Ascending aorta (tissue), 2 donors: ENCODE measurements at regions of chr20 and their contacts with region 1.

Region 1: GRCh38 chr20:50929299-50930138 is 1.7 kb downstream of the ADNP start:
- DNase-seq: peak; percentile 65 to 96
- H3K4me3 ChIP-seq: peak overlapping the region; percentile 89 to 98
- H3K27ac ChIP-seq: peak overlapping the region; percentile 72 to 75
- H3K4me1 ChIP-seq: peaks cover 0 to 18% of the 10 kb centered on the region in 2 donors
- H3K27me3 ChIP-seq: no peaks in the 10 kb centered on the region
- CTCF ChIP-seq: peak; percentile 92 to 95 (median 93)

Region 2: GRCh38 chr20:50815162-50815989 is 114.1 kb before region 1 on chr20:
- intact Hi-C with region 1: loop called (anchors 1 kb)
- DNase-seq: no peak
- H3K4me3 ChIP-seq: no peak overlapping the region
- H3K27ac ChIP-seq: peak overlapping the region; percentile 52 to 60
- H3K4me1 ChIP-seq: peaks cover 4 to 31% of the 10 kb centered on the region in 2 donors
- H3K27me3 ChIP-seq: no peaks in the 10 kb centered on the region
- CTCF ChIP-seq: no peak

Region 3: DNA sequence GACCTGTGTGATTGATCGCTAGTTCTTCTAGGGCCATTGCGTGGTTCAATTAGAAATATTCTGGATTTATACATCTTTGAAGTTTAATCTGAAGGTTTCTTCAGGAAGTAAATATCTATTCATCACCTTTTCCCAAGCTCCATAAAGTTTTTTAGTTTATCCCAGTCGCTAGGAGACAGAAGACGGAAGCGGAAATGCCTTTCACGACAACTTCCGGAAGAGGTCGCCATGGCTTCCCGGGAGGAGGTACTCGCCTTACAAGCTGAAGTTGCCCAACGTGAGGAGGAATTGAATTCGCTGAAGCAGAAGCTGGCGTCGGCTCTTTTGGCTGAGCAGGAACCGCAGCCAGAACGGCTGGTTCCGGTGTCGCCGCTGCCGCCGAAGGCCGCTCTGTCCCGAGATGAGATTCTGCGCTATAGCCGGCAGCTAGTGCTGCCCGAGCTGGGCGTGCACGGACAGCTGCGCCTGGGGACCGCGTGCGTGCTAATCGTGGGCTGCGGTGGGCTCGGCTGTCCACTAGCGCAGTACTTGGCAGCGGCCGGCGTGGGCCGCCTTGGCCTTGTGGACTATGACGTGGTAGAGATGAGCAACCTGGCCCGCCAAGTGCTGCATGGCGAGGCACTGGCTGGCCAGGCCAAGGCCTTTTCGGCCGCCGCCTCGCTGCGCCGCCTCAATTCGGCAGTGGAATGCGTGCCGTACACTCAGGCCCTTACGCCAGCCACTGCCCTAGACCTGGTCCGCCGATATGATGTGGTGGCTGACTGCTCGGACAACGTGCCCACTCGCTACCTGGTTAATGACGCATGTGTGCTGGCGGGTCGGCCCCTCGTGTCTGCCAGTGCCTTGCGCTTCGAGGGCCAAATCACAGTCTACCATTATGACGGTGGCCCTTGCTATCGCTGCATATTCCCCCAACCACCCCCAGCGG is 29.4 kb after region 1 on chr20 and contains the start of gene MOCS3:
- intact Hi-C with region 1: loop called (anchors 1 kb)
- DNase-seq: peak; percentile 23 to 92
- H3K4me3 ChIP-seq: peak within 1 kb of the TSS; percentile 72 to 97
- H3K27ac ChIP-seq: peak within 1 kb of the TSS; percentile 83 to 86
- H3K4me1 ChIP-seq: peaks cover 17 to 29% of the 10 kb centered on the region in 2 donors
- H3K27me3 ChIP-seq: no peaks in the 10 kb centered on the region
- CTCF ChIP-seq: no peak
- total RNA-seq, gene MOCS3: 4.7 TPM